Activated B cell treated with CpG ODN at 0.5 μM for 24 hours (primary cell): ENCODE measurements at regions of chr15 and their contacts with region 1.

Region 1: DNA sequence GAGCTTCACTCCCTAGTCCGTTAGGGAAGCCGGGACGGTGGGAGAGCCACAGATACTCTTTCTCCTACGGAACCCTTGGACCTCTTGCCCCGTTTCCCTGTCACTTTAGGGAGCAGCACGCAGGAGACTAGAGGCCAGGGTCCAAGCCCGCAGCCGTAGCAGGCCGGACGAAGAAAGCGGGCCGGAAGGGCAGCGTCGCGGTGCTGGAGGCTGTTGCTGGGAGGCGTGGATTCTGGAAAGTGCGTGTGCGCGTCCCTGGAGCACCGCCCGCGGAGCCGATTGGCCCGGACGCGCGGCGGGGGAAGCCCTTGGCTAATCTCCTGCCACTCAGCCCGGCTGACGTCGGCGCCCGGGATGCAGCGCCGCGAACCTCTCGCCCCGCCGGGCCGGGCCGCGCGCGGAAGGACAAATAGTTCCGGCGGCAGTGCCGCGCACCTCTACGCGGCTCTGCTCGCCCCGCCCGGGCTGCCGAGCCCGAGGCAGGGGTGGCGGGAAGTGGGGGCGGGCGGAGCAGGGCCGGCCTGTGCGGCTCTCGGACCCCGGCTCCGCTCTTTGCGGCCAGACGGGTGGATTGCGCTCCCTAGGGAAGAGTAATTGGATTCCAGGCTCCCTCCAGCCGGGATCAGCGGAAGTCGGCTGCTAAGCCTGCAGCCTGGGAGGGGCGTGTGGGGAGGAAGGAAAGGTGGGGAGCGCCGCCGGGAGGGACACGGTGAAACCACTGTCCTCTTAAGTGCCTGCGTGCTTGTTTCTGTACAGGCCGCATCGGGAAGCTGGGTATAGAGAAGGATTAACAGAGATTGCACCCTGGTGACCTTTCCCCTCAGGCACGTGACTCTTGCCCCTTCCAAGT is 31.3 kb upstream of the TCF12 start:
- DNase-seq: peak; percentile 81
- ATAC-seq: peak; percentile 85
- H3K4me3 Mint-ChIP-seq: peak overlapping the region; percentile 87
- H3K27ac Mint-ChIP-seq: peak overlapping the region; percentile 91
- H3K4me1 Mint-ChIP-seq: peaks cover 28% of the 10 kb centered on the region
- H3K27me3 Mint-ChIP-seq: no peaks in the 10 kb centered on the region
- CTCF ChIP-seq: no peak

Region 2: DNA sequence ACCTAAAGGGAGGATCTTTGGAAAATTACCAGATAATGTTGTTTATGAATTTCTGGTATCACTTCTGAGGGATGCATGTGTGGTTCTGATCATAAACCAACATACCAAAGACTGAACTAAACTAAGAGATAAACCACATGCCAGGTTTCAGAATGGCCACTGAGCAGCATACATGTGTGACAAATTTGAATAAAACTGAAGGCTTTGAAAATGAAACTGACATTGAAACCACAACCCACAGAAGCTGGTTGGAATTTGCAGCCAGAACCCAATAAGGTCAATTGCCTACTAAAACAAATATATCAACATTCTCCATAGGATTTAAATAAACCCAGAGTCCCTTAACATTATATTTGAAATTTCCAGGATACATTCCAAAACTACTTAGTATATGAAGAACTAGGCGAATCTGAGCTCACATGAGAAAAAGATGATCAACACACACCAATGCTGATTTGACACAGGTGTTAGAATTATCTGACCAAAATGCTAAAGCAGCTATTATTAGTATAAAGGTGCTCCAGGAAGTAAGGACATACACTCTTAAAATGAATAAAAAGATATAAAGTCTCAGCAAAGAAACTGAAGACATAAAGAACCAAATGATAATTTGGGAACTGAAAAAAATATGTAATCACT is 278.9 kb before region 1 on chr15:
- CTCF ChIA-PET with region 1: no interaction called
- POLR2A ChIA-PET with region 1: no interaction called
- intact Hi-C with region 1: loop called (anchors 5 kb)
- DNase-seq: no peak
- ATAC-seq: peak; percentile 73
- H3K4me3 Mint-ChIP-seq: peak overlapping the region; percentile 9
- H3K27ac Mint-ChIP-seq: peak overlapping the region; percentile 51
- H3K4me1 Mint-ChIP-seq: peaks cover 39% of the 10 kb centered on the region
- H3K27me3 Mint-ChIP-seq: peaks cover 3% of the 10 kb centered on the region
- CTCF ChIP-seq: no peak

Region 3: GRCh38 chr15:56719774-56720555 is 167.2 kb before region 1 on chr15:
- CTCF ChIA-PET with region 1: no interaction called
- POLR2A ChIA-PET with region 1: no interaction called
- intact Hi-C with region 1: no loop called
- DNase-seq: no peak
- ATAC-seq: no peak
- H3K4me3 Mint-ChIP-seq: no peak overlapping the region
- H3K27ac Mint-ChIP-seq: peak overlapping the region; percentile 86
- H3K4me1 Mint-ChIP-seq: peaks cover 68% of the 10 kb centered on the region
- H3K27me3 Mint-ChIP-seq: no peaks in the 10 kb centered on the region
- CTCF ChIP-seq: no peak

Region 4: GRCh38 chr15:56835718-56836171 is 51.4 kb before region 1 on chr15:
- CTCF ChIA-PET with region 1: no interaction called
- POLR2A ChIA-PET with region 1: no interaction called
- intact Hi-C with region 1: loop called (anchors 5 kb)
- DNase-seq: no peak
- ATAC-seq: no peak
- H3K4me3 Mint-ChIP-seq: no peak overlapping the region
- H3K27ac Mint-ChIP-seq: no peak overlapping the region
- H3K4me1 Mint-ChIP-seq: peaks cover 38% of the 10 kb centered on the region
- H3K27me3 Mint-ChIP-seq: no peaks in the 10 kb centered on the region
- CTCF ChIP-seq: no peak